ENCODE measurements at regions of chr14 and their contacts with region 1.

Region 1: DNA sequence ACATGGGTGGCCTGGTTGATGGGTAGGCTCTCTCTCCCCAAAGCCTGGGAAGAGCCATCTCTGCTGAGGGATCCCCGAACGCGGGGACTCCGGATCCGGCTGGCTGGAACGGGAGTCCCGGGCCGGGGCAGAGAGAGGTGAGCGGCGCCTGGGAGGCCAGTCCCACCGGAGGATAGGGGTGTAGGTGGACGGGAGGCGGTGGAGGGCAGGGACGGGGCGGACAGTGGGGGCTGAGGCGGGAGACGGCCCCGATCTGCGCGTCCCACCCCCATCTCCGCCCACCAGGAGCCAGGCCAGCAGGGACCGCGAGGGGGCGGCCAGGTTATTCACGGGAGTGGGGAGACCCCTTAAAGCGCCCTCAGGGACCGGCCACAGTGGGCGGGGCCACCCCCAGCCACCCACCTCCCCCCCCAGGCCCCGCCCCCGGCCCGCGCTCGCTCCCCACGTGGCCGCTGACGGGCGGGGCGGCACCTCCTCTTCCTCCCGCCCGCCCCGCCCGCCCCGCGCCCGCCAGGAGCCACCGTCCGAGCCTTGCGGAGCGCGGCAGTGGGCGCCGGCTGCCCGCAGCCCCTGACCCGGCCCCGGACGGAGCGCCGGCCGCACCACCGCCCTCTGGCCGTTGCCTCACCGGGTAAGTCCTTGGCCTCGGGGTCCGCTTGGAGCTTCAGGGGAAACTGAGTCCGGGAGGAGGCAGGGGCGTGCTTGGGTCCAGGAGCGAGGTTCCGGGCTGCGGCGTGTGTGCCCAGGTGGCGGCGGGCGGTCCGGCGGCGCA is at the start of gene INF2:
- DNase-seq: no peak
- H3K4me3 ChIP-seq: peak within 1 kb of the TSS; percentile 90 to 92
- H3K27ac ChIP-seq: peak within 1 kb of the TSS; percentile 80 to 82
- H3K4me1 ChIP-seq: peaks cover 17 to 39% of the 10 kb centered on the region in 2 donors
- H3K27me3 ChIP-seq: no peaks in the 10 kb centered on the region
- CTCF ChIP-seq: no peak
- total RNA-seq, gene INF2: 249 TPM

Region 2: GRCh38 chr14:105480952-105481801 is 791.9 kb after region 1 on chr14:
- intact Hi-C with region 1: loop called (anchors 10 kb)
- DNase-seq: peak; percentile 74 to 97
- H3K4me3 ChIP-seq: peak overlapping the region; percentile 55 to 58
- H3K27ac ChIP-seq: peak overlapping the region; percentile 89 to 99
- H3K4me1 ChIP-seq: peaks cover 32 to 65% of the 10 kb centered on the region in 2 donors
- H3K27me3 ChIP-seq: no peaks in the 10 kb centered on the region
- CTCF ChIP-seq: peak; percentile 98 to 99 (median 99)